PC-9 (cell line): ENCODE measurements at regions of chr10 and their contacts with region 1.

Region 1: DNA sequence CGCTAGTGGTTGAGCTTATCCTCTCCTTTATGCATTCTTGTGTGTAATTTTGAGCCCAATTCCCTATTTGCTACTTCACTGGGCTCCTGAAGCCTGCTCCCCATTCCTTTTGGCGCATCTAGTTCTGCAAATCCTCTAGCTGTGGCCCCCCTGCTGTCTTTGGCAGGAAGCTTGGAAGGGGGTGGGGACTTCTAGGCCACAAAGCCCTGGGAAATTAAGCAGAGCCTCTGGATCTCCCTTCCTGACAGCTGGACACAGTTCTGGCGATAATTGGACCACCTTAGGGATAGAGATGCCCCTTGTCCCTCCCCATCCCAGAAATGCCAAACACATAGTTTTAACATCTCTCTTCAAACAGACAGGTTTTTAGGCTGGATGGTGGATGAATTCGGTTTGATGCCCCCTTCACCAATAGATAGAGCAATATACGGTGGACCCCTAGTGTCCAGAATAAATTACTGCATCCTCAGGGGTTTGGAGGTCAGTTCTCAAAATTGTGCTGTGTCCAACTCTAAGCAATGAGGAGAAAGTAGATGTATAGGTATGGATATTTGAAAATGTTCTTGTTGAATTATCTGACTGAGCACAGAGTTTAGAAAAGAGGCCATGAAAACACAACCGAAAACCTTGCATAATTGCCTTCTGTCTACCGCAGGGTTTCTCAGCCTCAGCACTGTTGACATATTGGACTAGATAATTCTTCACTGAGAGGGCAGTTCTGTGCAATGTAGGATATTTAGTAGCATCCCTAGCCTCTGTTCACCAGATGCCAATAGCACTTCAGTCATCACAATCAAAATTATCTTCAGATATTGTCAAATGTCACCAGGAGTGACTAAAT is 75.5 kb downstream of the PAPSS2 start:
- DNase-seq: peak in 1 of 2 experiments; percentile 6
- H3K4me3 ChIP-seq: no peak overlapping the region
- H3K27ac ChIP-seq: no peak overlapping the region
- H3K4me1 ChIP-seq: no peaks in the 10 kb centered on the region
- H3K27me3 ChIP-seq: no peaks in the 10 kb centered on the region
- CTCF ChIP-seq: peak; percentile 82

Region 2: GRCh38 chr10:87531908-87532622 is 203.1 kb before region 1 on chr10:
- CTCF ChIA-PET with region 1: no interaction called
- POLR2A ChIA-PET with region 1: no interaction called
- intact Hi-C with region 1: loop called (anchors 1 kb)
- DNase-seq: no peak
- H3K4me3 ChIP-seq: no peak overlapping the region
- H3K27ac ChIP-seq: no peak overlapping the region
- H3K4me1 ChIP-seq: no peaks in the 10 kb centered on the region
- H3K27me3 ChIP-seq: no peaks in the 10 kb centered on the region
- CTCF ChIP-seq: no peak